WTC11 (cell line): ENCODE measurements at regions of chr13 and their contacts with region 1.

Region 1: DNA sequence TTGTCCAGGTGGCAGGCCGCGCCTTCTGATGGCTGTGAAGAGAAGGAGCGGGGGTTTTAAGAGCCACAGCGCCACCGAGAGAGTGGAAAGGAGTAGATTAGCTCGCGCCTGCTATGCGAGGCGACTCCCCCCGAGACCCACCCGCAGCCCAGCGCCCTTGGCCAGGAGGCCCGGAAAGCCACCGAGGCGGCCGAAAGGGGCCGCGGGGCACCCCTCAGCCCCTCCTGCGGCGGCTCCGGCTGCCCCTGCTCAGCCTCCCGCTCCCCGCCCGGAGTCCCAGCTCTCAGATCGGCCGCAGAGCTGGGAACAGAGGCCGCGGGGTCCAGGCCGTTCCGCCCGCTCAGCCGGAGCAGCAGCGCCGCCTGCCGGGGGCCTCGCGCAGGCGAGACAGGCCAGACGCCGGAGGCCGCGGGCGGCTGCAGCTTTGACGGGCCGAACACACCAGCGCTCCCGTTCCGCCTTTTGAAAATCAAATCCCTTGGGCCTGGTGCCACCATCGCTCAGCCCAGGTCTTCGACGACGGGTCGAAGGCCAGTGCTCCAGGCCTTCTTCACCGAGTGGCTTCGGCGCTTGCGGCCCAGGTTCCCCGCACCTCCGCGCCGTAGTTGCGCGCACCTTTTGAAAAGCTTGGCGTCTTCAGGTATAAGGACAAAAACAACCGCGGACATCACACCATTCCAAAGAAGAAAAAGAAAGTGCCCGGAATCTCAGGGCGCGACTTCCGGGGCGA is 15.3 kb downstream of the CDX2 start:
- DNase-seq: peak; percentile 91
- ATAC-seq: peak; percentile 95
- H3K4me3 Mint-ChIP-seq: peak overlapping the region; percentile 74
- H3K27ac Mint-ChIP-seq: no peak overlapping the region
- H3K4me1 Mint-ChIP-seq: peaks cover 6% of the 10 kb centered on the region
- H3K27me3 Mint-ChIP-seq: peaks cover 99% of the 10 kb centered on the region
- CTCF ChIP-seq: peak; percentile 90

Region 2: GRCh38 chr13:27792393-27793218 is 161.2 kb before region 1 on chr13 and contains the start of gene GSX1:
- CTCF ChIA-PET with region 1: interaction called, 24 read pairs
- POLR2A ChIA-PET with region 1: no interaction called
- DNase-seq: peak; percentile 87
- ATAC-seq: peak; percentile 51
- H3K4me3 Mint-ChIP-seq: peak within 1 kb of the TSS; percentile 59
- H3K27ac Mint-ChIP-seq: no peak within 1 kb of the TSS
- H3K4me1 Mint-ChIP-seq: peaks cover 64% of the 10 kb centered on the region
- H3K27me3 Mint-ChIP-seq: peaks cover 100% of the 10 kb centered on the region
- CTCF ChIP-seq: no peak
- total RNA-seq, gene GSX1: not detected in 3 replicates

Region 3: DNA sequence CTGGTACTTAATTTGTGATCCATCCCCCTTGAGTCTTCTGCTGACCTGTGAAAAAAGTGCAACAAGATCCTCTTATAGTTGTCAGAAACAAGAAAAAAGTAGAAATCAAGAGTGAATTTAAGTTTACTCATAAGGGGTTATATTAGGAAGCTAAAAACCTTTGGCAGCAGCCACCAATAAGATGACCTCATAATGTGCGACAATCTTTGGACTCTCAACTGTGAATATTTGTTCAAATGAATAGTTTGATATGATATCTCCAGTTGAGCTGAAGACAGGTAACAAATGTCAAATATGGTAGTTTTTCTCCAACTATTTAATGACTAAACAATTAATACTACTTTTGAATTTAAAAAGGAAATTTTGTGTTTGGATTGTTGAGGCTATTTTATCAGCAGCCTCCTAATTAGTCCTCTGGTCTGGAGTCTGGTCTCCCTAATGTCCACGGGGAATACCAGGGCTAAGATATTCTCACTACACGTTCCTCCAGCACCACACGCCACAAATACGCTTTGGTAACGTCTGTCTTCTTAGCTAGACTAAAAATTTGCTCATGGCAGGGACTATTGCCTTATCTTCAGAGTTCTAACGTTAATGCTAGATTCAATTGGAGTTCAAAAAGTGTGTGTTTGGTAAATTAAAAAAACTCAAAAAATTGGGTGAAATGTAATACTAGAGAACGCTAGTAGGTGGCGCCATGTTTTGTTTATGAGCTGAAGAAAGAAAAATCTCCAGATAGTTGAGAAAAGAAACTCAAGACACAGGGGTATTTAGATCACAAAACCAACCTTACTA is 85.0 kb before region 1 on chr13:
- CTCF ChIA-PET with region 1: interaction called, 40 read pairs
- POLR2A ChIA-PET with region 1: no interaction called
- DNase-seq: no peak
- ATAC-seq: no peak
- H3K4me3 Mint-ChIP-seq: no peak overlapping the region
- H3K27ac Mint-ChIP-seq: no peak overlapping the region
- H3K4me1 Mint-ChIP-seq: no peaks in the 10 kb centered on the region
- H3K27me3 Mint-ChIP-seq: peaks cover 8% of the 10 kb centered on the region
- CTCF ChIP-seq: peak; percentile 24; the same call in 1 of the 2 replicates

Region 4: GRCh38 chr13:27911521-27911920 is 42.3 kb before region 1 on chr13:
- CTCF ChIA-PET with region 1: interaction called, 23 read pairs
- POLR2A ChIA-PET with region 1: no interaction called
- DNase-seq: no peak
- ATAC-seq: no peak
- H3K4me3 Mint-ChIP-seq: no peak overlapping the region
- H3K27ac Mint-ChIP-seq: no peak overlapping the region
- H3K4me1 Mint-ChIP-seq: peaks cover 10% of the 10 kb centered on the region
- H3K27me3 Mint-ChIP-seq: peaks cover 87% of the 10 kb centered on the region
- CTCF ChIP-seq: no peak

Region 5: GRCh38 chr13:27926644-27927434 is 27.0 kb before region 1 on chr13:
- CTCF ChIA-PET with region 1: interaction called, 39 read pairs
- POLR2A ChIA-PET with region 1: interaction called, 3 read pairs
- DNase-seq: peak; percentile 47
- ATAC-seq: no peak
- H3K4me3 Mint-ChIP-seq: no peak overlapping the region
- H3K27ac Mint-ChIP-seq: no peak overlapping the region
- H3K4me1 Mint-ChIP-seq: peaks cover 52% of the 10 kb centered on the region
- H3K27me3 Mint-ChIP-seq: peaks cover 100% of the 10 kb centered on the region
- CTCF ChIP-seq: no peak

Region 6: GRCh38 chr13:27968316-27969081 is 14.7 kb after region 1 on chr13:
- CTCF ChIA-PET with region 1: interaction called, 53 read pairs
- POLR2A ChIA-PET with region 1: no interaction called
- DNase-seq: peak; percentile 62
- ATAC-seq: peak; percentile 1; the same call in 1 of the 2 replicates
- H3K4me3 Mint-ChIP-seq: peak overlapping the region; percentile 54
- H3K27ac Mint-ChIP-seq: no peak overlapping the region
- H3K4me1 Mint-ChIP-seq: peaks cover 62% of the 10 kb centered on the region
- H3K27me3 Mint-ChIP-seq: peaks cover 100% of the 10 kb centered on the region
- CTCF ChIP-seq: no peak

Region 7: GRCh38 chr13:27985600-27985999 is 31.8 kb after region 1 on chr13:
- CTCF ChIA-PET with region 1: interaction called, 24 read pairs
- POLR2A ChIA-PET with region 1: no interaction called
- DNase-seq: no peak
- ATAC-seq: no peak
- H3K4me3 Mint-ChIP-seq: no peak overlapping the region
- H3K27ac Mint-ChIP-seq: no peak overlapping the region
- H3K4me1 Mint-ChIP-seq: peaks cover 4% of the 10 kb centered on the region; the same call in 1 of the 2 replicates
- H3K27me3 Mint-ChIP-seq: peaks cover 80% of the 10 kb centered on the region
- CTCF ChIP-seq: no peak